MCF 10A (cell line): ENCODE measurements at regions of chr21 and their contacts with region 1.

Region 1: DNA sequence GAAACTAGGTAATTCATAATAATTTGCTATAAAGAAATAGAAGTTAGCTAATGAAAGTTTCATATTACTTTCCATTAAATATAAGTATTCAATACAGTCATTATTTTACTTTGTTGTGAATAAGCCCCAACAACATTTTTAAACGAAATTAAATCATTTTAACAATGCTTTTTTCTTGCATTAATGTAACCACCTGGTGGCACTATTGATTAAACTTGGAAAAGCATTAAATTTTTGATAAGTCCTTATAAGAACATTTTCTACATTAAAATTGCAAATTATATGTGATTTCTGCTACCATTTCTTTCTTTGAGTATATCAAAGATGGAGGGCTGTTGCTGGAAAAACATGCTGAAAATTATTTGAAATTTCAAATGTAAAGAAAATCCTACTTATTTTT is 918.8 kb upstream of the TMPRSS15 start:
- DNase-seq: peak; percentile 20
- H3K4me3 Mint-ChIP-seq: no peak overlapping the region
- H3K27ac Mint-ChIP-seq: no peak overlapping the region
- H3K4me1 Mint-ChIP-seq: peaks cover 4% of the 10 kb centered on the region
- H3K27me3 Mint-ChIP-seq: no peaks in the 10 kb centered on the region
- CTCF ChIP-seq: peak; percentile 50

Region 2: DNA sequence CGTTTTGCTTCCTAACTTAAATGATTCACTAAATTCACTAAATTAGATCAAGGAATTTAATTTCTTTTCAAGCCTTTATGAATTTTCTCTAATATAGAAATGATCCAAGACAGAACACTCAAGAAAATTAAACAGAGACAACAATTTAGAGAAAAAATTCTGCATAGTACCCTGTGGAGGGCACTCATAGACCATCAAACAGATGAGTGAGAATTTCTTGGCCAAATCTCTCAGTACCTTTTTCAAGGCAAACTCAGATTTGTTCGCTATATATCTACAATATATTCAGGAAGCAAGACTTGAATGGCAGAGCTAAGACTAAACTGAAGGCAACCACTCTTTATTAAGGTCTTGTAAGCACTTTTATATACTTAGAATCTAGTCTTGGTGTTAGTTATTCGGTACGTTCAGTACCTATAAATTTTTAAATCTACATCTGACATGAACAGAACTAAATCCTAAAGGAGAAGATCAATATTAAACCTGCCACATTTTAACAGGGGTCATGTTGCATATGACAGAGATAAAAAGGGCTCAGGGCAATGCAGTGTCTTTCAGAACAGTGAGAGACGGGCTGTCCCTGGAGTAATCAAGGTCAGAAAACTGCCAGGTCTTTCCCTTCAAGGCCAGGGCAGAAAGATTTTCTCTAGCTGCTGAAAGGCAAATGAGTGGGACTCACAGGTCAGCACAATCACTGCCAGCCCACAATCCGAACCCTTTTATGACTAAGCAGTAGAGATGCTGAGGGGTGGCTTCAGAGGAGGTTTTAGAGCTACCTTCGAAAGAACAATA is 800.0 kb before region 1 on chr21:
- CTCF ChIA-PET with region 1: no interaction called
- POLR2A ChIA-PET with region 1: no interaction called
- intact Hi-C with region 1: loop called (anchors 5 kb)
- DNase-seq: peak; percentile 22
- H3K4me3 Mint-ChIP-seq: no peak overlapping the region
- H3K27ac Mint-ChIP-seq: no peak overlapping the region
- H3K4me1 Mint-ChIP-seq: no peaks in the 10 kb centered on the region
- H3K27me3 Mint-ChIP-seq: peaks cover 10% of the 10 kb centered on the region
- CTCF ChIP-seq: peak; percentile 55

Region 3: DNA sequence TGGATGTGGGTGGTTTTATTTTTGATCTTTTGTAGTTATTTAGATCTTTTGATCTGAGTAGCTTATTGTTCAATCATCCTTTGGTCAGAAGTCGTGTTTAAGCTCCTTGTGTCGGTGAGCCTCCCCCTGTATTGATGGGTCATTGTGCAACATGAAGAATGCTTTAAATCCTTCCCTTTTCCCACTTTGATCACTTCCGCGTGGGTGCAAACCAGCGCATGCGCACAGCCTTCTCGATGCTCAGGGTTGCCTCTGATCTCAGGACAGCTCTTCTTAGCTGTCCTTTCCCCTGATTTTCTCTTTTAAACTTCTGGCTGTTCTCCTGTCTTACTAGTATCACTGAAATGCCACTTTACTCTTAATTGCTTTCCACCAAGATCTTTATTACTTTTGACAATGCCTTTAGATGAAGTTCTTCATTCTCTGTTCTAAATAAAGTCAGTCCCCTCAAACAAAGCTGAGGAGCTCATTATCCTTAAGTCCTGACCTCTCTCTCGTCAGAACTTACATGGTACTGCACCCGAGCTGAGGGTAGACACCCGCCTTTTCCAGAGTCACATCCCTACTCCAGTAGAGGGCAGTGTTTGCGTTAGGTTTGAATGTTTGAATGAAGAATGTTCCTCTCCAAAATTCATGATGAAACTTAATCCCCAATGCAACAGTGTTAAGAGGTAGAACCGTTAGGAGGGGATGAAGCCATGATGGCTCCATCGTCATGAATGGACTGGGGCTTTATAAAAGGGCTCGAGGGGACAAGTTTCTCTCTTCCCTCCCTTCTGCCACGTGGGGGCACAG is 370.9 kb before region 1 on chr21:
- CTCF ChIA-PET with region 1: interaction called, 3 read pairs
- POLR2A ChIA-PET with region 1: no interaction called
- intact Hi-C with region 1: loop called (anchors 5 kb)
- DNase-seq: peak; percentile 79
- H3K4me3 Mint-ChIP-seq: no peak overlapping the region
- H3K27ac Mint-ChIP-seq: no peak overlapping the region
- H3K4me1 Mint-ChIP-seq: peaks cover 7% of the 10 kb centered on the region
- H3K27me3 Mint-ChIP-seq: no peaks in the 10 kb centered on the region
- CTCF ChIP-seq: peak; percentile 38

Region 4: DNA sequence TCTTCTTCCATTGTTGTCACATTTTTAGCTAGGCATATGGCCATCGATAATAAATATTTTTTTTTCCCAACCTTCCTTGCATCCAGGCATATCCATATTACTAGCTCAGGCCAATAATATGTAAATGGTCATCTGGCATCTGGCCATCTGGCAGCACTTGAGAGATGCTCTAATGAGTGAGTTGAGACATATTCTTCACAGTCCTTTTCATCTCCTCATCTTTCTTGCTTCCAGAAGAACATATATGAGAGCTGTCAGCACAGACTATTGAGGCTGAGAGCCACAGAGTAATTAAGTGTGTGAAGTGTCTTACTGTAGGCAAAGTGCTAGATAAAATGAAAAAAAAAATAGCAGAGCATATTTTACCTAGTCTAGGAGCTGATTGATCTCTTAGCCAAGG is 290.4 kb before region 1 on chr21:
- CTCF ChIA-PET with region 1: no interaction called
- POLR2A ChIA-PET with region 1: no interaction called
- intact Hi-C with region 1: no loop called
- DNase-seq: peak; percentile 13
- H3K4me3 Mint-ChIP-seq: no peak overlapping the region
- H3K27ac Mint-ChIP-seq: no peak overlapping the region
- H3K4me1 Mint-ChIP-seq: peaks cover 9% of the 10 kb centered on the region
- H3K27me3 Mint-ChIP-seq: no peaks in the 10 kb centered on the region
- CTCF ChIP-seq: no peak

Region 5: GRCh38 chr21:19993268-19993667 is 670.9 kb after region 1 on chr21:
- CTCF ChIA-PET with region 1: no interaction called
- POLR2A ChIA-PET with region 1: no interaction called
- intact Hi-C with region 1: no loop called
- DNase-seq: no peak
- H3K4me3 Mint-ChIP-seq: no peak overlapping the region
- H3K27ac Mint-ChIP-seq: no peak overlapping the region
- H3K4me1 Mint-ChIP-seq: no peaks in the 10 kb centered on the region
- H3K27me3 Mint-ChIP-seq: no peaks in the 10 kb centered on the region
- CTCF ChIP-seq: no peak

Region 6: DNA sequence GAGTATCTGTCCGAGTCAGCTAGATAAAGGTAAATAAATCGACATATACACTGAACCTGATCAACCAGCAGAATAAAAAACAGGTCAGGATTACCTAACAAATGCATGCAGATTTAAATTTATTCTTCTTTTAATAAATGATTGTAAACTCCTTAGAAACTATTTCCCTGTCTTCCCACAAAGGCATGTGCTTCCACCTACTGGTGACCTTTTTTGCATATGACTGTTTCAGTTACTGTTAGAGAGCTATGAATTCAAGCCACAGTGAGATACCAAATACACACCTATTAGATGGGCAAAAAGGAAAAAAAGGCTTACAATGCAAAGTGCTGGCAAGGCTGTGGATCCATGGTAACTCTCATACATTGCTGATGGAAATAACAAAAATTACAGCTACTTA is 718.4 kb after region 1 on chr21:
- CTCF ChIA-PET with region 1: interaction called, 14 read pairs
- POLR2A ChIA-PET with region 1: no interaction called
- intact Hi-C with region 1: no loop called
- DNase-seq: peak; percentile 21
- H3K4me3 Mint-ChIP-seq: no peak overlapping the region
- H3K27ac Mint-ChIP-seq: no peak overlapping the region
- H3K4me1 Mint-ChIP-seq: no peaks in the 10 kb centered on the region
- H3K27me3 Mint-ChIP-seq: no peaks in the 10 kb centered on the region
- CTCF ChIP-seq: peak; percentile 40

Region 7: DNA sequence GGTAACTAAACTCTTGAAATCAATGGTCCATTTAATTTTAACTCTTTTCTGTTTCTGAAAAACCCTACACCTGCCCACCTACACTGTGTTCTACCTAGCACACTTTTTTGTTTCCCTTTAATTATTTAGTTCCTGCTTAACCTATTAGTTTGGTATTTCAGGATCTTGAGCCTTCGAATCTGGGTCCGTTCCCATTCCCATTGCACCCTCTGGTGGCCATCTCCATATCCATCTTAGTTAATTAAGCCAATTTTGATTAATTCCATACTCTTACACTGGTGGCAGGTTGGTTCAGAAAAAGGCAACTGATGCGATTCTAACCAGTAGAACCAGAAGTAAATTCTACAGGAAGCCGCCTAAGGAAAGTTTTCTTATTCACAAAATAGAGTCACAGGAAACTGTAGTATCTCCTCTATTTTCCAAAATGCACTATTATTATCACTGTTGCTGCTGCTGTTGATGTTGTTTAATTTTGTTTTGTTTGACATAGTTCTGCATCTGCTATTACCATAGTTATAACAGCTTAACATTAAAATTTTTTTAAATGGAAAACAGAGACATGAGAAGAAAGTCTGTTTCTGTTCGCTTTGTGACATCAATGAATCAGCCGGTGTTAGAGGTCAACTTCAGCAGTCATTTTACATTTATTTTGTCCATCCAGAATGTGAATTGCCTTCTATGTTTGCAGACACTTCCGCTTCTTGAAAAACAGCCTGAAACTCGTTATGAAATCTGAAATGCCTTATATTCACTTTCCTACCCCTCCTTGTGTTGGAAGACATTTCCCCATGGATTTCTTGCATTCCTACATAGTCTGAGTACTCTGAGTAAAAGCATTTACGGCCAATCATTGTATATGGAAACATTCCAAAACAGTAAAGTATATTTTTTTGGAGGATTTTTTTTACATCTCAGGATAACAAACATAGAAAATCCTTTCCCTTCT is 1560.4 kb after region 1 on chr21:
- CTCF ChIA-PET with region 1: no interaction called
- POLR2A ChIA-PET with region 1: no interaction called
- intact Hi-C with region 1: loop called (anchors 1 kb)
- DNase-seq: peak; percentile 67
- H3K4me3 Mint-ChIP-seq: no peak overlapping the region
- H3K27ac Mint-ChIP-seq: no peak overlapping the region
- H3K4me1 Mint-ChIP-seq: peaks cover 10% of the 10 kb centered on the region
- H3K27me3 Mint-ChIP-seq: no peaks in the 10 kb centered on the region
- CTCF ChIP-seq: peak; percentile 67